Prostate gland (tissue), 2 donors: ENCODE measurements at regions of chr5 and their contacts with region 1.

Region 1: GRCh38 chr5:54524704-54525103 is 7.1 kb downstream of the SNX18 start:
- DNase-seq: no peak
- H3K4me3 ChIP-seq: no peak overlapping the region
- H3K27ac ChIP-seq: no peak overlapping the region
- H3K4me1 ChIP-seq: no peaks in the 10 kb centered on the region
- H3K27me3 ChIP-seq: no peaks in the 10 kb centered on the region
- CTCF ChIP-seq: no peak
- POLR2A ChIP-seq: no peak

Region 2: DNA sequence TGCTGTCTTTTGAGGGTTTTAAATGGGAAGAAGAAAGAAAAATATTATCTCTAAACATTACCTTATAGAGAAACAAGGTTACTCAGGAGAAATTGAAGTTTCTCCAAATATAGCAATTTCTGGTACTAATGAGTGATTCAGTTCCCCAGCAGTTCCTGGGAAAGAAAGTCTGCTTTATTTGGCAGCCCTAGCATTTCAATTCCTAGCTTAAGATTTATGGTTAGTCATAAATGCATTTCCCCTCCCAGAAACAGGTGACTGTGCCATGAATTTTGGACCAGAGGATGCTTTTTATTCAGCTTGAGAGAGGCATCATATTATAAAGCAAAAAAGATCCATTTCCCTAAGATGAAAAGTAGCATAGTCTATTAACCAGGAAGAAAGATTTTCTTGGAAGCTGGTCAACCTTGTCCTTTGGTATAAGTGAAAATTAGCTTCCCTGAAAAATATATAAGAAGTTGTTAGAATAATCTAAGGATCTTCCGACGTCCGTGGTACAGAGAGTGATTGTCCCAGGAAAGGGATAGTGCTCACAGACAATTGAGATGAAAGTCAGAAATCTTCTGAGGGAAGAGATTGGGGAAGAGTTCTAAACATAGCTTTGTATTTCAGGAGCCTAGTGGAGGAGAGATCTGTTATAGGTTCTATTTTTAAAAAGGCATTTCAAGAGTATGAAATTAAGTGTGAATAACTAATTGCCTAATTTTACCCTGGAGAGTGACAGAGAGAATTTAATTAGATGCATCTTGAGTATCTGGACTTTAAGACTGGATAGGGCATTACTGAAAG is 295.8 kb after region 1 on chr5:
- intact Hi-C with region 1: loop called (anchors 5 kb)
- DNase-seq: no peak
- H3K4me3 ChIP-seq: no peak overlapping the region
- H3K27ac ChIP-seq: no peak overlapping the region
- H3K4me1 ChIP-seq: no peaks in the 10 kb centered on the region
- H3K27me3 ChIP-seq: no peaks in the 10 kb centered on the region
- CTCF ChIP-seq: no peak
- POLR2A ChIP-seq: no peak